ENCODE measurements at regions of chr10 and their contacts with region 1.

Region 1: DNA sequence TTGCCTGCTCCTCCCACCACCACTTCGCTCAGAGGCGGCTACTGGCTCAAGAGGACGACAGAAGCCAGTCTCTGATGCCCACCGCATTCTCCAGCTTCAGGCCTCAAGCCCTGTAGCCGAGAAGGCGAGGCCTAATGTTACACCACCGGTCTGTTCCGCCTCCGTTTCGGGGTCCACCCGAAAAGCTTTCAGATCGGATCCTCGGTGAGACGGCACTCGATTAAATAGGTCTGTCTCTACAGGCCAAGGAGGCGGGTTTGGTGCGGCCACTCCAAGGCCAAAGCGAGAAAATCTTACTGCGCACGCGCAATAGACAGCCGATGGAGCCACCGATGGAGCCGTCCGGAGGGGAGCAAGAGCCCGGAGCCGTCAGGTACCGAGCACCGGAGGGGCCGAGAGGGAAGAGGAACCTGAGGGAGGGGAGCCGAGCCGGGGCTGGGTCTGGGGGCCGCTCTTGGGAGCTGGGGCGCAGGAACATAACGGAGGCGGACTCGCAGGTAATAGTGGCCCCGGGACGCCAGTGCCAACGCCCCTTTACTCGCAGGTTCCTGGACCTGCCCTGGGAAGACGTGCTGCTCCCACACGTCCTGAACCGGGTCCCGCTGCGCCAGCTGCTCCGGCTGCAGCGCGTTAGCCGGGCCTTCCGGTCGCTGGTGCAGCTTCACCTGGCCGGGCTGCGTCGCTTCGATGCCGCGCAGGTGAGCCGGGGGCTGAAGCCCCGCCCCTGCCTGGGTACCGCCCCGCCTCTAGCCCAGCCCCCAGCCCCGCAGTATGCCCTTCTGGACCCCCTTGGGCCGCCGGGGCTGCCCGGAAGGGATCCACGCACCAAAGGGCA is at the start of gene FBXL15:
- DNase-seq: peak; percentile 94
- H3K4me3 ChIP-seq: peak within 1 kb of the TSS; percentile 62 to 73
- H3K27ac ChIP-seq: peak within 1 kb of the TSS; percentile 83 to 86
- H3K4me1 ChIP-seq: peaks cover 26% of the 10 kb centered on the region
- H3K27me3 ChIP-seq: no peaks in the 10 kb centered on the region
- CTCF ChIP-seq: peak in 2 of 4 experiments; percentile 23 to 33
- POLR2A ChIP-seq: peak; percentile 26
- total RNA-seq, gene FBXL15: 22.2 to 36.3 TPM

Region 2: DNA sequence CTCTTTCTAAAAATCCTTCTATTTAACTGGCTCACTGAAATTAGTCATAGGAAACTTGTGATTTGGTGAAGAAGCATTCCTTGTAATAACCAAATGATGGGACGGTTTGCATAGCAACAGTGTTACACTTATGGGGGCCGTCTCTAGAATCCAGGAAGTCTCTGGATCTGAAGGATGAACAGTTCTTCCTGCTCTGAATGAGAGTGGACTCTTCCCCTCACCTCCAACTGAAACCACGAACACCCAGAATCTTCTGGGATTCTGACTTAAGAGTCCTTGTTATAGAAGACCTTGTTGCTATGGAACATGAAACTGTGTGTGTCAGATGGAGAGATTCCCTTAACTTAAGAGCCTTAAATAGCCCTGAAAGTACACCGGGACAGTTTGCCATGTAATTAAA is 245.6 kb before region 1 on chr10:
- intact Hi-C with region 1: no loop called
- DNase-seq: no peak
- H3K4me3 ChIP-seq: no peak overlapping the region
- H3K27ac ChIP-seq: no peak overlapping the region
- H3K4me1 ChIP-seq: no peaks in the 10 kb centered on the region
- H3K27me3 ChIP-seq: no peaks in the 10 kb centered on the region
- CTCF ChIP-seq: no peak
- POLR2A ChIP-seq: no peak

Region 3: DNA sequence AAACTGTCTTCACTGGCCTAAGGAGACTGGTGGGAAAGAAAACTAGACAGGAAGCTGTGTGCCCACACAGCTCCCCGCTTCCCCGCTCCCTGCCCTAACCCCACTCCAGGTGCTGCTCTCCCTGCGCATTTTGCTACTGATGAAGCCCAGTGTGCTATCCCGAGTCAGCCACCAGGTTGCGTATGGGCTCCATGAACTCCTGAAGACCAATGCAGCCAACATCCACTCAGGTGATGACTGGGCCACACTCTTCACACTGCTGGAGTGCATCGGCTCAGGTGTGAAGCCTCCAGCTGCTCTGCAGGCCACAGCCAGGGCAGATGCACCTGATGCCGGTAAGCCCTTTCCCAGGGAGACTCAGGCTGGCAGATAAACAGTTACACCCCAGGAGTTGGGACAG is 45.8 kb before region 1 on chr10:
- intact Hi-C with region 1: no loop called
- DNase-seq: no peak
- H3K4me3 ChIP-seq: no peak overlapping the region
- H3K27ac ChIP-seq: no peak overlapping the region
- H3K4me1 ChIP-seq: no peaks in the 10 kb centered on the region
- H3K27me3 ChIP-seq: no peaks in the 10 kb centered on the region
- CTCF ChIP-seq: no peak
- POLR2A ChIP-seq: no peak

Region 4: GRCh38 chr10:102394079-102394800 is 26.8 kb before region 1 on chr10:
- intact Hi-C with region 1: loop called (anchors 2 kb)
- DNase-seq: peak; percentile 91
- H3K4me3 ChIP-seq: peak overlapping the region; percentile 66 to 80
- H3K27ac ChIP-seq: peak overlapping the region; percentile 97 to 98
- H3K4me1 ChIP-seq: peaks cover 6% of the 10 kb centered on the region
- H3K27me3 ChIP-seq: no peaks in the 10 kb centered on the region
- CTCF ChIP-seq: peak in 3 of 4 experiments; percentile 95 to 98 (median 98)
- POLR2A ChIP-seq: peak; percentile 85

Measured in prostate gland (tissue), 2 donors.